ENCODE measurements at regions of chr12 and their contacts with region 1.

Region 1: GRCh38 chr12:26126340-26127284 is 1.8 kb upstream of the BHLHE41 start:
- DNase-seq: peak; percentile 93
- ATAC-seq: peak; percentile 84

Region 2: GRCh38 chr12:26195641-26196420 is 69.2 kb after region 1 on chr12:
- intact Hi-C with region 1: loop called (anchors 10 kb)
- DNase-seq: peak; percentile 64
- ATAC-seq: peak; percentile 85

Region 3: GRCh38 chr12:26274441-26275312 is 148.1 kb after region 1 on chr12:
- intact Hi-C with region 1: loop called (anchors 5 kb)
- DNase-seq: peak; percentile 86
- ATAC-seq: peak; percentile 92

Region 4: DNA sequence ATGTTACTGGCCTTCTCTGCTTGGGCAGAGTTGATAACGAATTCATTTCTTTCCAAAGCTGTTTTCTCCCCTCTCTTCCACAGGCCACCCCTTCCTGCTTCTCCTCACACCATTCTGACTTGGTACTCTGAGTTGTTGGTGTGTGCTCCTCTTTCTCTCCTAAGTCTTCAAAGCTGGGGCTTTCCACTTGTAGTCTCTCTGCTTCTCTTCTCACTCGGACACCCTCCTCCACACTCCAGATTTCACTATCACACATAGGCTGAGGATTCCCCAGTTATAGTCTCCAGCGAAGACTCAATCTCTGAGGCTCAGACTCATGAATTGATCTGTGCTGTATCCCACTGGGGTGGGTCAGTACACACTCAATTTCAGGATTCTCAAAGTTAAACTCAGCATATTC is 269.8 kb after region 1 on chr12:
- intact Hi-C with region 1: loop called (anchors 10 kb)
- DNase-seq: no peak
- ATAC-seq: no peak

Measured in Right ventricle myocardium superior (tissue), 1 donor.